ENCODE measurements at regions of chr5 and their contacts with region 1.

Region 1: DNA sequence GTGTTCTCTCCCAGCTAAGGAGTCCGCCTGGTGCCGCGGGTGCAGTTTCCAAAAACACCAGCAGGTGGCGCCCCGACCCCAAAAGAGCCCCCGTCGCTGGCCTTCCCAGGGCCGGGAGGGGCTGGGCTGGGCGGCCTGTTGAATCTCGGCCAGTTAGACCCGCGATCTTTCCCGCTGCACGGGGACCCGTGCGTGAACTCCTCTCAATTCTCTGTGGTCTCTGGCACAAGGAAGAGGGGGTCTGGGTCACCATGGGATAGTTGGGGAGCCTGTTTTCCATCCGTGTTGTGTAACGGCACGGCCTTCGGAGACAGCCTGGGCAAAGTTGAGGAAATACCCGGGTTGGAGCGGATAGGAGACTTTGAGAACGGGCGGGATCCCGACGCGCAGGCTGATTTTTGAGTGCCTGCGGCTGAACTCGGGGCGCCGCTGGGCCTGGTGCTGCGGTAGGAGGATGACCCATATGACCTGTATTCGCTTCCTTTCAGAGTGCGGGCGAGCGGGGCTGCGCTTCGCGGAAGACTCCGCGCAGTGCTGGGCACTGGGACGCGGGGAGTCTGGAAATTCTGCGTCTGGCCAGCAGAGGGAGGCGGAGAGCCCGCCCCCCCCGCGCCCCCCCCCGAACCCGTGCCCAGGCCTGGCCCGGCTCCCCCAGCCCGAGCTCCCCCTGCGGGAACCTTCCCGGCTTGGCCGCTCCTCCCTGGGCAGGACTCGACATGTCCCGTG is 7.9 kb upstream of the PSD2 start:
- DNase-seq: peak; percentile 84 to 92
- ATAC-seq: peak; percentile 86 to 95 (median 91)
- H3K4me3 ChIP-seq: peak overlapping the region; percentile 51 to 68 (median 66)
- H3K27ac ChIP-seq: peak overlapping the region in 9 of 10 donors; percentile 34 to 81 (median 70)
- H3K4me1 ChIP-seq: peaks cover 0 to 14% (median 7%) of the 10 kb centered on the region in 9 donors
- H3K27me3 ChIP-seq: peaks cover 0 to 20% (median 0%) of the 10 kb centered on the region in 7 donors
- CTCF ChIP-seq: peak; percentile 80 to 98 (median 91)

Region 2: GRCh38 chr5:139232147-139232724 is 555.5 kb before region 1 on chr5:
- intact Hi-C with region 1: no loop called
- DNase-seq: no peak
- ATAC-seq: no peak
- H3K4me3 ChIP-seq: no peak overlapping the region
- H3K27ac ChIP-seq: no peak overlapping the region
- H3K4me1 ChIP-seq: no peaks in the 10 kb centered on the region
- H3K27me3 ChIP-seq: no peaks in the 10 kb centered on the region
- CTCF ChIP-seq: no peak

Region 3: GRCh38 chr5:139808493-139809139 is 20.9 kb after region 1 on chr5:
- intact Hi-C with region 1: no loop called
- DNase-seq: peak; percentile 16 to 41
- ATAC-seq: peak in 4 of 8 donors; percentile 65 to 80 (median 70)
- H3K4me3 ChIP-seq: no peak overlapping the region
- H3K27ac ChIP-seq: no peak overlapping the region
- H3K4me1 ChIP-seq: no peaks in the 10 kb centered on the region
- H3K27me3 ChIP-seq: peaks cover 0 to 15% (median under 1%) of the 10 kb centered on the region in 7 donors
- CTCF ChIP-seq: peak in 1 of 9 donors; percentile 7

Region 4: DNA sequence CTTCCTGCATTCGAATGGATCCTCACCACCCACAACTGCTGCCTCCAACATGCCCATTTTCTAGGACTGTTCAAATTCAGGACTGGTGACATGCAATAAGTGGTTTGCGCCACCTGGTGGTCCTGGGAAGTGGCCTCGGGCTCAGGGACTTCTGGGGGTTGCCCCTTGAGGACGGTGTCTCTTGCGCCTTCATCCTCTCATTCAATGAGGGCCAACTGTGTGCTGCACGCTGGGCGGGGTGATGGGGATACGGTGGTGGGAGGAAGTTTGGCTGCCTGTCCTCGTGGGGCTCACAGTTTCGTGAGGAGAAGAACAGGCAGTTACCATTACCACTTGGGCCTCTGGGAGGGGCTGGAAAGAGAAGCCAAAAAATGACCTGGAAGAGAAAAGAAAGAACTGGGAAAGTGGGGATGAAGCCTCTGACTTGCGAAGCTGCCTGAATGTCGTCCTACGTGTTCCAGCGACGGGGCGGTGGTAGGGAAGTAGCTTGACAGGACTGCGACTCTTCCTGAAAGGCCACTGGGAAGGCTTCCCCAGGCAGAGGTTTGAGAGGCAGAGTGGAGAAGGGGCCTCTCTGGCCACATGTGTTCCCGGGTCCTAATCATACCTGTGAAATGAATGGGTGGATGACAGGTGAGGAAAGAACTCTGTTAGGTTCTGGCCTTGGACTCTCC is 56.9 kb after region 1 on chr5:
- intact Hi-C with region 1: loop called in 8 of 10 experiments (anchors 1 to 5 kb)
- DNase-seq: peak; percentile 66 to 69
- ATAC-seq: peak in 4 of 8 donors; percentile 29 to 37 (median 35)
- H3K4me3 ChIP-seq: no peak overlapping the region
- H3K27ac ChIP-seq: no peak overlapping the region
- H3K4me1 ChIP-seq: peaks cover 3 to 25% (median 17%) of the 10 kb centered on the region in 9 donors
- H3K27me3 ChIP-seq: peaks cover 0 to 44% (median 0%) of the 10 kb centered on the region in 7 donors
- CTCF ChIP-seq: peak; percentile 38 to 76 (median 69)

Region 5: GRCh38 chr5:139863855-139864558 is 76.3 kb after region 1 on chr5:
- intact Hi-C with region 1: loop called (anchors 1 to 5 kb)
- DNase-seq: peak; percentile 48 to 65
- ATAC-seq: peak; percentile 43 to 86 (median 77)
- H3K4me3 ChIP-seq: no peak overlapping the region
- H3K27ac ChIP-seq: peak overlapping the region in 4 of 10 donors; percentile 11 to 49 (median 24)
- H3K4me1 ChIP-seq: peaks cover 0 to 23% (median 11%) of the 10 kb centered on the region in 9 donors
- H3K27me3 ChIP-seq: no peaks in the 10 kb centered on the region
- CTCF ChIP-seq: peak; percentile 81 to 92 (median 89)

Region 6: GRCh38 chr5:139872052-139872766 is 84.5 kb after region 1 on chr5:
- intact Hi-C with region 1: loop called in 1 of 10 experiments (anchors 5 kb)
- DNase-seq: no peak
- ATAC-seq: no peak
- H3K4me3 ChIP-seq: no peak overlapping the region
- H3K27ac ChIP-seq: no peak overlapping the region
- H3K4me1 ChIP-seq: peaks cover 0 to 19% (median 0%) of the 10 kb centered on the region in 9 donors
- H3K27me3 ChIP-seq: no peaks in the 10 kb centered on the region
- CTCF ChIP-seq: peak in 1 of 9 donors; percentile 10

Region 7: GRCh38 chr5:139903795-139904565 is 116.2 kb after region 1 on chr5:
- intact Hi-C with region 1: no loop called
- DNase-seq: peak in 1 of 2 donors; percentile 32
- ATAC-seq: peak; percentile 41 to 75 (median 60)
- H3K4me3 ChIP-seq: peak overlapping the region; percentile 28 to 61 (median 52)
- H3K27ac ChIP-seq: no peak overlapping the region
- H3K4me1 ChIP-seq: peaks cover 15 to 30% (median 21%) of the 10 kb centered on the region in 9 donors
- H3K27me3 ChIP-seq: peaks cover 0 to 58% (median 17%) of the 10 kb centered on the region in 7 donors
- CTCF ChIP-seq: no peak

Region 8: DNA sequence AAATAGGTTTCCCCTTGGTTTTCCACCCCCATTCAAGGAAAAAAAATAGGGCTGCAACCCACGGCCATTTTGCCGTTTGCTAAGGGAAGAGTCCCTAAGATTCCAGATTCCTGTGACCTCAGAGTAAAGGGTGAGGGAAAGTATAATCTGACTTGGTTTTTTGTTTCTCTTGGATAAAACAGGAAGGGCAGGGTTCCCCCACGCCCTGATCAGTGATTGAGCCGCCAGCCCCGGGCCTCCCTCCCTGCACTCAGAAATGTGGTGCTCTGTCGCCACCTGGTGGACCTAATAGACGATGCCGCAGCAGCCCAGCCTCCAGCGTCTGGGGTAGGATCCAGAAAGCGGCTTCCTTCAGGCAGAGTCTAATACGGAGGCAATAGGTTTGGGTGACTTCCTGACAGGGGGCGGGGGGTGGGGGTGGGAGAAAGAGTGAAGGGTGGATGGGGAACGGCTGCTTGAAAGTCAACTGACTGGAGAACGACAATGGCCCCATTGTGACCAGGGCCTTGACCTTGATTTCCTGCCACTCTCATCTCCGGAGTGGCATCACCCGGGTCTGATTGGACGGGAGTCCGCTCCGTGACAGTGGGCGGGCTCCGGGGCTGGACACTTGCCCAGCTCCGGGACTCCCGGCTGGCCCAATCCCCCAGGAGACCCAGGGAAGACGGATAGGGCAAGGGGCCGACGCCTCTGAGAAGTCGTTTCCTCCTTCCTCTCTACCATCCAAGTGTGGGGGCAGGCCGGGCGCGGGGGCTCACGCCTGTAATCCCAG is 369.5 kb after region 1 on chr5:
- intact Hi-C with region 1: loop called in 8 of 10 experiments (anchors 1 to 10 kb)
- DNase-seq: peak; percentile 91
- ATAC-seq: peak; percentile 94 to 97 (median 96)
- H3K4me3 ChIP-seq: peak overlapping the region in 9 of 10 donors; percentile 27 to 58 (median 44)
- H3K27ac ChIP-seq: peak overlapping the region in 9 of 10 donors; percentile 39 to 74 (median 70)
- H3K4me1 ChIP-seq: peaks cover 0 to 22% (median 13%) of the 10 kb centered on the region in 9 donors
- H3K27me3 ChIP-seq: no peaks in the 10 kb centered on the region
- CTCF ChIP-seq: peak; percentile 87 to 93 (median 90)

Measured in heart right ventricle (tissue), 16 donors.